ENCODE measurements at regions of chr17 and their contacts with region 1.

Region 1: DNA sequence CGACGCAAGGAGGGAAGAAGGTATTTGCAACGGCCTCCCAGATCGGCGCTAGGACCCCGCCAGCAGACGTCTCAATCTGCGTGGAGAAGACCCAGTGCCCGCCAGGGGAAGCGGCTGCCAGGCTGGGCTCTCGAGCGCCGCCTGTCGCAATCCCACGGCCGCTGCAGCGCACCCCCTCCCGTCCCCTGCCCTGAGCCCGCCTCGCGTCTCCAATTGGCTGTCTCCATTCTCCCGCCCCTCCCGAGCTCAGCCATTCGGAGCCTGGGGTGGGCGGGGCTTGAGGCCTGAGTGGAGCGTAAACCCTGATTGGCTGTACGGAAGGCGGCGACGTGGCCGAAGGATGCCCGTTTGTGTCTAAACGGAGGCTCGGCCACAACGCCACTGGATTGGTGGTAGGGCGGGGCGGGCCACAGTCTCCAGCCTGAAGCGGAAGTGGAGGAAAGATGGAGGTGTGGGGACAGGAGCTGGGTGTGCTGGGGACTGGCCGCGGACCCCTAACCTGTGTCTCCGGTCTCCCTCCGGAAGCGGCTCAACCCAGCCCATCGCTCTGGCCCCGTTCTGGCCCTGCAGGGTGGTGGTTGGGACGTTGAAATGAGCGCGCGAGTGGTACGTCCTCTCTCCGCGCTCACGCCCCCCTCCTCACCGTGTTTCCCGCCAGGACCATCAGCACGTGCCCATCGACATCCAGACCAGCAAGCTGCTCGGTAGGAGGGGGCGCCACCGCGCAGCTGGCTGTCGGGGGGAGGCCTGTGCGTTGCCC is at the start of gene CDK5RAP3:
- DNase-seq: peak; percentile 96 to 98 (median 97)
- H3K4me3 ChIP-seq: peak within 1 kb of the TSS; percentile 89 to 95
- H3K4me3 Mint-ChIP-seq: peak within 1 kb of the TSS; percentile 97 to 100 (median 98)
- H3K27ac ChIP-seq: peak within 1 kb of the TSS; percentile 62
- H3K27ac Mint-ChIP-seq: peak within 1 kb of the TSS; percentile 83 to 97 (median 96)
- H3K4me1 ChIP-seq: peaks cover 28% of the 10 kb centered on the region
- H3K4me1 Mint-ChIP-seq: peaks cover 17 to 42% (median 25%) of the 10 kb centered on the region in 4 donors
- H3K27me3 ChIP-seq: no peaks in the 10 kb centered on the region
- H3K27me3 Mint-ChIP-seq: peaks cover 0 to 1% of the 10 kb centered on the region in 2 donors
- total RNA-seq, gene CDK5RAP3: 340 to 343 TPM

Region 2: GRCh38 chr17:47941236-47941994 is 29.5 kb before region 1 on chr17 and contains the start of gene PNPO:
- CTCF ChIA-PET with region 1: interaction called, 244 read pairs
- POLR2A ChIA-PET with region 1: interaction called, 34 read pairs
- intact Hi-C with region 1: loop called (anchors 1 kb)
- DNase-seq: peak; percentile 93 to 98 (median 94)
- H3K4me3 ChIP-seq: peak within 1 kb of the TSS; percentile 82 to 85
- H3K4me3 Mint-ChIP-seq: peak within 1 kb of the TSS; percentile 77 to 95 (median 88)
- H3K27ac ChIP-seq: peak within 1 kb of the TSS; percentile 76
- H3K27ac Mint-ChIP-seq: peak within 1 kb of the TSS; percentile 62 to 96 (median 92)
- H3K4me1 ChIP-seq: peaks cover 29% of the 10 kb centered on the region
- H3K4me1 Mint-ChIP-seq: peaks cover 20 to 46% (median 32%) of the 10 kb centered on the region in 4 donors
- H3K27me3 ChIP-seq: no peaks in the 10 kb centered on the region
- H3K27me3 Mint-ChIP-seq: no peaks in the 10 kb centered on the region
- total RNA-seq, gene PNPO: 12.1 TPM

Region 3: DNA sequence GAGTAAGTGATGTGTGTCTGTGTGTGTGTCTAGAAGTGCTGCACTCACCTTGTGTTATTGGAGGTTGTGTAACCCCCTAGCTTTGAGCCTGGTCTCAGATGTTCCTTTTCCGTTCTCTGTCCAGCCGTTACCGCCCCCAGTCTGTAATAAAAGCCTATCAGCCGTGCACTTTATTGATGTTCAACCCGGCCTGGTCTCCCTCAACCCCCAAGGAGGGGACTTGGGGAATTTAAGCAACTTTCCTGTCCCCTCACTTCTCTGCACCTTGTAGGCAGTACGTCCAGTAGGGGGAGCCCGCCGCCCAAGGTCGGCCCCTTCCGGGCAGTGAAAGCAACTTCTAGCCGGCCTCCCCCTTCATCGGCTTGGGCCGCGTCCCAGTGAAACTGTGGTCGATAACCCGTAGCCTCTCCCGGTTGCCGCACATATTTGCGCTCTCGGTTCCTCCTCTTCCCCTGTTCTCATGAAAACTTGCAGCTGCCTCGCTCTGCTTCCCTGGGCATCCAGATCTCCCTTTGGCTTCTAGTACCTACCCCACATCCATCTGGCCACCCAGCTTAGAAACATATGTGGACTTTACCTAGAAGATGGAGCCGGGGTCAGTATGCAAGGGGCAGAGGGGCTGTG is 21.6 kb before region 1 on chr17:
- CTCF ChIA-PET with region 1: interaction called, 244 read pairs
- POLR2A ChIA-PET with region 1: interaction called, 30 read pairs
- intact Hi-C with region 1: loop called (anchors 1 kb)
- DNase-seq: peak; percentile 59 to 71 (median 63)
- H3K4me3 ChIP-seq: peak overlapping the region in 1 of 2 donors; percentile 51
- H3K4me3 Mint-ChIP-seq: peak overlapping the region; percentile 61 to 91 (median 74)
- H3K27ac ChIP-seq: peak overlapping the region; percentile 37
- H3K27ac Mint-ChIP-seq: peak overlapping the region; percentile 29 to 93 (median 69)
- H3K4me1 ChIP-seq: peaks cover 34% of the 10 kb centered on the region
- H3K4me1 Mint-ChIP-seq: peaks cover 21 to 36% (median 29%) of the 10 kb centered on the region in 4 donors
- H3K27me3 ChIP-seq: no peaks in the 10 kb centered on the region
- H3K27me3 Mint-ChIP-seq: no peaks in the 10 kb centered on the region

Region 4: DNA sequence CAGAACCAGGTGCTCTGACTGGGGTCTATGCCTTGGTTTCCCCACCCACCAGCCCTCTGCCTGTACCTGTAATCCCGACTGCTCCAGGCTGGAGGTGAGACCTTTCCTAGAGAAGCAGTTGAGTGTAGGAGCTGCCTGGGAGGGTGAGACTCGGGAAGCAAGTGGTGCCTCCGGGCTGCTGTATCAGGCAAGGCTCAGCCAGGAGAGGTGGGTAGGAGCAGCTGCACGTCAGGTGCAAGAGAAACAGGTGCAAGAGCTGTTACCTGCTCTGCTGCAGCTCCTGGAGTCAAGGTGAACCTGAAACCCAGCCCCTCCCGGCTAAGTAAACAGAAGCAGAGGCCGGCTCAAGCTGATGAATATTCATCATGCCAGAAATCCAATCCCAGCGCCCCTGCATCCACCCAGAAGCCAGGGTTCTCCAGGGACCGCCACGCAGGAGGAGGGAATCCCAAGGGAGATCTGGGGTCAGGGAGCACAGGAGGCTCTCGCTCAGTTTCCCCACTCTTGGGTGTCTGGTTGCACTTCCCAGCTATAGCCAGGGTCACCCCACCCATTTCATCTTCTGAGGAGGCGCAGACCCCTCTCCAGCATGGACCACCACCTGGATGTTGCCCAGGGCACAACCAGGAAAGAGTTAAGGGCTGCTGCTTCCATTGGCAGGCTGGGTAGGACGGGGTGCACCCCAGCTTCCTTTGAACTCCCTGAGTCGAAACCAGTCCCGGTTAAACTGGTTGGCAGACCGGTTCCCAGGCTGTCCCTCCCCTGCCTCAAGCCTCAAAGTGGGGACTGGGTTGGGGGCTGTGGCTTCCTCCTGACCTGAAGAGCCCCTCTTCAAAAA is 13.1 kb before region 1 on chr17 and contains the start of gene PRR15L:
- CTCF ChIA-PET with region 1: interaction called, 244 read pairs
- POLR2A ChIA-PET with region 1: interaction called, 7 read pairs
- intact Hi-C with region 1: no loop called
- DNase-seq: no peak
- H3K4me3 ChIP-seq: no peak within 1 kb of the TSS
- H3K4me3 Mint-ChIP-seq: no peak within 1 kb of the TSS
- H3K27ac ChIP-seq: no peak within 1 kb of the TSS
- H3K27ac Mint-ChIP-seq: peak within 1 kb of the TSS in 1 of 7 donors; percentile 17
- H3K4me1 ChIP-seq: no peaks in the 10 kb centered on the region
- H3K4me1 Mint-ChIP-seq: no peaks in the 10 kb centered on the region
- H3K27me3 ChIP-seq: no peaks in the 10 kb centered on the region
- H3K27me3 Mint-ChIP-seq: no peaks in the 10 kb centered on the region
- total RNA-seq, gene PRR15L: not detected

Region 5: DNA sequence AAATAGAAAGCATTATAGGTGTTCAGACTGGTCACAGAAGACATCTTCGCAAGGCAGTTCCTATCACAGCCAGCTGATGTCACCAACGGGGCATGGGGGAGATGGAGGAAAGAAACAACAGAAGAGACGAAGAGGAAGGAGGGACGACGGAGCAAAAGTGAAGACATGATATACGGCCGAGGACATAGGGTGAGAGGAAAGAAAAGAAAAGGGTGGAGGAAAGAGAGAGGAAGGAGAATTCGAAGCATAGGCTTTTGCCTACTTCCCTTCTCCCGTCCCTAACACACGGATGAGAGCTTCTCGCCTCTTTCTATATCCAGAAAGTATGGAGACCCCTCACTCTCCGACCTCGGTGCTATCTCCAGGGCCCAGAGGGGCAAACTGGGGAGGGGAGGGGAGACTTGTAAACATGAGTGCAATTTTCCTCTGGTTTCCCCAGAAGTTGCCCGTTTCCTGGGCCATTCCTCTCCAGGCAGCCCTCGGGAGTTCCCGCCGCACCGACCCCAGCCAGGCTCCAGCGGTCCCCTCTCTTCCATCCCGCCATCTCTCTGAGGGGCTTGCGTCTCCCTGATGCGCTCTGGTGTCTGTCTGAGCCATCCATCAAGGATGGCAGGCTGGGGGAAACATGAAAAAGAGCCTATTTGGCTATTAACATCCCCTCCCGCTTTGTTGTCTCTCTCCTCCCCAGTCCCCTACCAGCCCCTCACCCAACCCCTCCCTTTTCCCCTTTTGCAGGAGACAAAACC is 40.7 kb after region 1 on chr17:
- CTCF ChIA-PET with region 1: interaction called, 4 read pairs
- POLR2A ChIA-PET with region 1: interaction called, 12 read pairs
- intact Hi-C with region 1: no loop called
- DNase-seq: peak; percentile 25 to 51 (median 42)
- H3K4me3 ChIP-seq: peak overlapping the region in 1 of 2 donors; percentile 36
- H3K4me3 Mint-ChIP-seq: peak overlapping the region; percentile 76 to 92 (median 84)
- H3K27ac ChIP-seq: no peak overlapping the region
- H3K27ac Mint-ChIP-seq: peak overlapping the region in 3 of 7 donors; percentile 11 to 85 (median 77)
- H3K4me1 ChIP-seq: peaks cover 8% of the 10 kb centered on the region
- H3K4me1 Mint-ChIP-seq: peaks cover 9 to 18% (median 14%) of the 10 kb centered on the region in 4 donors
- H3K27me3 ChIP-seq: peaks cover 11% of the 10 kb centered on the region
- H3K27me3 Mint-ChIP-seq: peaks cover 22 to 42% of the 10 kb centered on the region in 2 donors

Region 6: DNA sequence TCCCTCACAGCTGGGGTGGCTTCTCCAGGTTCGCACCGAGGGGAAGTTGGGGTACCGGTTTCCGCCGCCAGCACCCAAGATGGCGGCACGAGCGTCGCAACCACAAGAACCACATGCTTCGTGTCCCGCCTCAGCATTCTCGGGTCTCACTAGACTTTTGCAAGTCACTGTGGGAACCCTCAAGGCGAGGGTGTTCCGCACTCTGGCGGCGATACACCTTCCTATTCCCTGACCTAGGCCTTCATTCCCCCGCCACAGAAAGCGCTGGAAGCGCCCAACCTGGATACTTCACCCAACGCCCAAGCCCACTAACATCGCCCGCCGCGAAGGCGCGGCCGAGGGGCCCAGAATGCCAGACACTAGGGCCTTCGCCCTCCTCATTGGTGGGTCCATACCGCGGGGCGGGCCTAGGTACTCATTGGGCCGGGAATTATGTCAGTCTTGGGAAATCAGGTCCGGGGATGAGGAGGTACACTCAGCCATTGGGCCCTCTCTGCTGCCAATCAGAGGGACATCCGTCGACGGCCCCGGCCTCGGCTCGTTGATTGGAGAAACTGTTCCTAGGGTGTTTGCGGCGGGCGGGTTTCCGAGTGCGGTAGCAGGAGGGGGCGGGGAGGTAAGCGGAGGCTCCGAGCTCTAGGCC is 77.0 kb after region 1 on chr17 and contains the start of gene NFE2L1:
- CTCF ChIA-PET with region 1: interaction called, 5 read pairs
- POLR2A ChIA-PET with region 1: interaction called, 16 read pairs
- intact Hi-C with region 1: loop called (anchors 2 kb)
- DNase-seq: peak; percentile 98 to 100 (median 98)
- H3K4me3 ChIP-seq: peak within 1 kb of the TSS; percentile 86 to 88
- H3K4me3 Mint-ChIP-seq: peak within 1 kb of the TSS; percentile 94 to 99 (median 96)
- H3K27ac ChIP-seq: peak within 1 kb of the TSS; percentile 76
- H3K27ac Mint-ChIP-seq: peak within 1 kb of the TSS; percentile 94 to 99 (median 99)
- H3K4me1 ChIP-seq: peaks cover 54% of the 10 kb centered on the region
- H3K4me1 Mint-ChIP-seq: peaks cover 29 to 69% (median 49%) of the 10 kb centered on the region in 4 donors
- H3K27me3 ChIP-seq: no peaks in the 10 kb centered on the region
- H3K27me3 Mint-ChIP-seq: no peaks in the 10 kb centered on the region
- total RNA-seq, gene NFE2L1: 53.5 to 62.5 TPM